Tibial artery (tissue), 4 donors: ENCODE measurements at regions of chr20 and their contacts with region 1.

Region 1: DNA sequence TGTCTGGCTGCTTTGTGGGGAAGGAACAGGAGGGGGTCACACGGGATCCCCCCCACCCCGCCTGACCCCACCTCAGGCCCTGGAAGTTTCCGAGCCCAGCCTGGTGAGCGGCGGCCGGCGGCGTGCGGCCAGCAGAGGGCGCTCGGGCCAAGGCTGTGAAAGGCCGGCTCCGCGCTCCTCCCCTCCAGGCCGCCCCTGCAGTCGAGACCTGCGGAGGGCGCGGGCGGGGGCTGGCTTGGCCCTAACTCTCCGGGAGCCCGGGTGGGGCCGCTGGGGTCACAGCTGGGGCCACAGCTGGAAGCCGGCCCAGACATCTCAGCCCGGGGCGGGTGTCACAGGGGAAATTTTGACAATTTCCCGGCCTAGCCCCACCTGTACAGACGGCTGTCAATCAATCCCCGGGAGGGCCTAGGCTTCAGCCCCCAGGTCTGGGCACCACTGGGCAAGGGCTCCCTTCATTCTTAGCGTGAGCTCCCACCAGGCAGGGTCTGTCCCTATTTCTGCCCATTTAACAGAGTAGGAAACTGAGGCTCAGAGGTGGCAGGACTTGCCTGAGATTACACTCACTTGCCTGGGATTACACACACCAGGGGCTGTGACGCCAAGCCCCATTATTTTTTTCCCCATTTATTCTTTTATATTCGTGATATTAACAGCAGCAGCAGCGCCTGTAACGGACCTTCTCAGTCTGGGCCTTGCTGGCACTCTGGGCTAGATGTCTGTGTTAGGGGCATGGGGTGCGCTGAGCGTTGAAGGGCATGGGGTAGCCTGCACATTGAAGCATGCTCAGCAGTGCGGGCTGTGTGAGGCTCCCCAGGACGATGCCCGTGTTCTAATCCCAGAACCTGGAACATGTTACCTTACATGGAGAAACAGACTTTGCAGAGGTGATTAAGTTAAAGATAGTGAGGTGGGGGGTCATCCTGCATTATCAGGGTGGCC is 23.0 kb downstream of the ZBP1 start:
- DNase-seq: peak; percentile 56 to 80
- H3K4me3 ChIP-seq: peak overlapping the region in 1 of 2 donors; percentile 26
- H3K27ac ChIP-seq: no peak overlapping the region
- H3K4me1 ChIP-seq: peaks cover 0 to 22% (median 7%) of the 10 kb centered on the region in 4 donors
- H3K27me3 ChIP-seq: peaks cover 0 to 14% of the 10 kb centered on the region in 2 donors
- CTCF ChIP-seq: peak; percentile 92 to 97

Region 2: DNA sequence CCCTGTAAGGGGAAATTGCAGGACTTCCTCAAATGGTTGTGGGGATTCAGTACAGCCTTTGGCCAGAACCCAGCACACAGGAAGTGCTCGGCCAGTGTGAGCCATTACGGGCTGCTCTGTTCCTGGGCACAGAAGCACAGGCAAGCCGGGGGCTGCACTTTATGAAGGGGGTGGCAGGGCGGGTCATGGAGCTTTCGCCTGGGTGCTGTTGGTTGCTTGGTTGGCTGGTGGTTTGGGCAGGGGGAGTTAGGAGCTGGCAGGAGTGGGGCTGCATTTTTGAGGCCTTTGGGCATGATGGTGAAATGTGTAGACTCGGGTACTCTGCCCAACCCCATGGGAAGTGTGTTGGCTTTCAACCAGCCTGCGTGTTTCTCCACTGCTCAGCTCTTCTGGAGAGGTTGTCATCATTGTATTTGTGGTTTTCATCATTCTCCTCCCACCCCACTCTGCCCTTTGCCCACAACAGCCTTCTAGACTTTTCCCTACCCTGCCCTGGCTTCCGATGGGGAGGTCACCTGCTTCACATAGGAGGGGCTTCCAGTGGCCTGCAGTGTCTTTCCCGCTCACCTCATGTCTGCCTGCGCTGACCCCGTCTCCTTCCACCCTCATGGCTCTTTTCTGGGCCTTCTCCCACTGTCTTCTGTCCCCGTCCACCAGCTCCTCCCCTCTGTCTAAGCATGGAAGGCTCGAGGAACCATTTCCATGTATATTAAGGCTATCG is 222.2 kb before region 1 on chr20:
- intact Hi-C with region 1: loop called (anchors 5 kb)
- DNase-seq: peak; percentile 66 to 67
- H3K4me3 ChIP-seq: no peak overlapping the region
- H3K27ac ChIP-seq: no peak overlapping the region
- H3K4me1 ChIP-seq: no peaks in the 10 kb centered on the region
- H3K27me3 ChIP-seq: no peaks in the 10 kb centered on the region
- CTCF ChIP-seq: no peak

Region 3: GRCh38 chr20:57514273-57514751 is 83.0 kb before region 1 on chr20:
- intact Hi-C with region 1: loop called (anchors 2 kb)
- DNase-seq: peak; percentile 81 to 85
- H3K4me3 ChIP-seq: no peak overlapping the region
- H3K27ac ChIP-seq: no peak overlapping the region
- H3K4me1 ChIP-seq: no peaks in the 10 kb centered on the region
- H3K27me3 ChIP-seq: peaks cover 0 to 5% of the 10 kb centered on the region in 2 donors
- CTCF ChIP-seq: peak; percentile 80 to 91

Region 4: DNA sequence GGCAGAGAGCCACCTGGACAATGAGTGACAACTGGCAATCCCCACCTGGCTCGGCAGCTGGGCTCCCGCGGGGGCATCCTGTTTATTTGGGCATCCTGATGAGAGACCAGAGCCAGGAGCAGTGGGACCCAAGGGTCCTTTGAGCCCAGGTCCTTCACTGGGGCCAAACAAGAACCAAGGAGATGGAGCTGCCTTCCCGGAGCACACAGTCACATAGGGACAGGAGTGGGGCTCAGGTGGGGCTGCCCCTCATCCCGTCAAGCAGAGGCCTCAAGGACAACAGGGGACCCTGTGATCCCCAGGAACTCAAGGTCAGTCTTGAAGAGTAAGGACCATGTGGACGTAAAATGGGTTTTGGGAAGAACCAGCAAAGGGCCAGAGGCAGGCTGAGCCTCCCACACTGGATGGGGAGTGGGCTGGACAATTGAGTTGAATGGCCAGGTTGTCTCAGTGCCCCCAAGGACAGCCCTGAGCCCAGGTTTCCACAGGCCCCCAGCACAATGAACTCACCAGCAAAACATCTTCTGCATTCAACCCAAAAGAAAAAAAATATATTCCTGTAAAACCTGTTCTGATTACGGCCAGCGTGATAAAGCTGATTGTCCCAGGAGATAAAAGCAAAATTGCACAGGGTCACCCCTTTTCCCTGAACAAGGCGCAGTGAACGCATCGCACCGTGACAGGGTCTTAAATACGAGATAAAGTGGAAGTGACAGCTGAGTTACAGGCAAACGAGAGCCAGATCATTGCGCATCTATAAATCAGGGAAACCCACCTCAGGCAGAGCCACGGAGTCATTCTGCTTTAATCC is 544.9 kb after region 1 on chr20:
- intact Hi-C with region 1: no loop called
- DNase-seq: peak in 1 of 2 donors; percentile 56
- H3K4me3 ChIP-seq: no peak overlapping the region
- H3K27ac ChIP-seq: peak overlapping the region; percentile 4 to 94
- H3K4me1 ChIP-seq: peaks cover 2 to 34% (median 21%) of the 10 kb centered on the region in 4 donors
- H3K27me3 ChIP-seq: no peaks in the 10 kb centered on the region
- CTCF ChIP-seq: no peak